ENCODE measurements at regions of chr20 and their contacts with region 1.

Region 1: DNA sequence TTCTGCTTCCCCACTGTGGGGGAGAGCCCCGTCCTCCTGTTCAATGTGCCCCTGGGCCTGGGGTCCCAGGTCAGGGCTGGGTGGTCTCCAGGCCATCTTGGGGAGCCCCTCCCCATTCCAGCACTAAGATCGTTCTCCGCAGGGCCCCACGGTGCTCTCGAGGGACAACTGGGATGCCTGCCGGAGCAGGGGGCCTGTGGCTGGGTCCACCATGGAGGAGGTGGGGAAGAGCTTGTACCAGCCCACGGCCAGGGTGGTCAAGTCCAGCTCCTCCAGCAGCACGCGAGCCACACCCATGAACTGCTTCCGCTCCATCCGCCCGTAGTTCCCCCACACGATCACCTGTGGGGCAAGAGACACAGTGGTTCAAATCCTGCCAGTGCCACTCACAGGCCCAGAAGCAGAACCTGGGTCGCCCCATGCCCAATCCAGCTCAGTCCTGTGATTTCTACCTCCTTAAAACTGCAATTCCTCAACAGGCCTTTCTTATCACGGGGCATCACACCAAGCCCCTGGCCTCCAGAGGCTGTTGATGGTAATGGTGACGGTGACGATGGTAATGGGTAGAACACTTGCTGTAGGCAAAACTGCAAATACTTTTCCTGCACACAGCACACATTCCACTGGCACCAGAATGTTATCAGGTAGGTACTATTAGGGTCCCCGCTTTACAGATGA is 10.5 kb downstream of the KCNK15 start:
- DNase-seq: no peak
- H3K4me3 ChIP-seq: no peak overlapping the region
- H3K27ac ChIP-seq: no peak overlapping the region
- H3K4me1 ChIP-seq: no peaks in the 10 kb centered on the region
- H3K27me3 ChIP-seq: peaks cover under 1% of the 10 kb centered on the region
- CTCF ChIP-seq: no peak

Region 2: GRCh38 chr20:44866703-44867335 is 110.7 kb after region 1 on chr20:
- intact Hi-C with region 1: loop called (anchors 5 kb)
- DNase-seq: no peak
- H3K4me3 ChIP-seq: no peak overlapping the region
- H3K27ac ChIP-seq: no peak overlapping the region
- H3K4me1 ChIP-seq: peaks cover 0 to 3% (median 0%) of the 10 kb centered on the region in 3 donors
- H3K27me3 ChIP-seq: no peaks in the 10 kb centered on the region
- CTCF ChIP-seq: no peak

Measured in kidney (tissue), 22 donors.